B cell (primary cell): ENCODE measurements at regions of chr9 and their contacts with region 1.

Region 1: DNA sequence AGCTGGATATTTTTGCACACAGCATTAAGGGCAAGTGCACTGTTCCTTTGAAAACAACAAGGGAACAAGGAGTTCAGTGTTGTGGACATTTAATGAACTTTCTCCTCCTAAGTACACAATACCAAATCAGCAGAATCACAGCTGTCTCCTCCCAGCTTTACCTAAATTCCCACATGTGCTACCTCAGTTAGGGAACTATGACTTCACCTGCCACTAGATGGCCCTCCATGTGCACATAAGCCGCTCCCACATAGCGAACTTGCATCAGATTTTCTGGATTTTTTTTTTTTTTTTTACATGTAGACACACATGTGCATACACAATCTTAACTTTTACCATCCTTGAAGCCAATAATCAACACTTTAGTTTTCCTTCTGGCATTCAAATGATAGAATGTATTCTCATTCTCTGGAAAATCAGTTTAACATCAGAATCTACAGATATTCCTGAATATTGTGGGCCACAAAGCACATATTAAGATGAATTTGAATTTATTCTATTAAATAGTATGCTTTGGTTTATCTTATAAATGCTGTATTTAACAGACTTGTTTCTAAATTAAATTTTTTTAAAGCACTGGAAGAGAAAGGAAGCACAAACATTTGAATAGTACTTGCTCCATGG is 123.6 kb downstream of the PALM2AKAP2 start:
- DNase-seq: peak; percentile 82
- ATAC-seq: peak; percentile 63
- H3K4me3 ChIP-seq: no peak overlapping the region
- H3K4me3 Mint-ChIP-seq: no peak overlapping the region
- H3K27ac ChIP-seq: no peak overlapping the region
- H3K27ac Mint-ChIP-seq: no peak overlapping the region
- H3K4me1 ChIP-seq: peaks cover 34 to 35% of the 10 kb centered on the region in 2 donors
- H3K4me1 Mint-ChIP-seq: peaks cover 11% of the 10 kb centered on the region
- H3K27me3 ChIP-seq: no peaks in the 10 kb centered on the region
- H3K27me3 Mint-ChIP-seq: no peaks in the 10 kb centered on the region
- CTCF ChIP-seq: peak; percentile 94

Region 2: GRCh38 chr9:109574068-109574882 is 329.4 kb before region 1 on chr9:
- CTCF ChIA-PET with region 1: interaction called, 9 read pairs
- POLR2A ChIA-PET with region 1: no interaction called
- intact Hi-C with region 1: loop called (anchors 2 kb)
- DNase-seq: peak; percentile 47
- ATAC-seq: no peak
- H3K4me3 ChIP-seq: no peak overlapping the region
- H3K4me3 Mint-ChIP-seq: no peak overlapping the region
- H3K27ac ChIP-seq: no peak overlapping the region
- H3K27ac Mint-ChIP-seq: no peak overlapping the region
- H3K4me1 ChIP-seq: no peaks in the 10 kb centered on the region
- H3K4me1 Mint-ChIP-seq: no peaks in the 10 kb centered on the region
- H3K27me3 ChIP-seq: peaks cover 0 to 4% (median 0%) of the 10 kb centered on the region in 4 experiments
- H3K27me3 Mint-ChIP-seq: peaks cover 12% of the 10 kb centered on the region
- CTCF ChIP-seq: peak; percentile 82

Region 3: GRCh38 chr9:110048403-110048975 is 144.9 kb after region 1 on chr9:
- CTCF ChIA-PET with region 1: interaction called, 585 read pairs
- POLR2A ChIA-PET with region 1: interaction called, 17 read pairs
- intact Hi-C with region 1: loop called (anchors 2 kb)
- DNase-seq: peak; percentile 91
- ATAC-seq: peak; percentile 95
- H3K4me3 ChIP-seq: peak overlapping the region; percentile 79 to 98 (median 88)
- H3K4me3 Mint-ChIP-seq: peak overlapping the region; percentile 98
- H3K27ac ChIP-seq: peak overlapping the region; percentile 40 to 71
- H3K27ac Mint-ChIP-seq: peak overlapping the region; percentile 93
- H3K4me1 ChIP-seq: peaks cover 42 to 47% of the 10 kb centered on the region in 2 donors
- H3K4me1 Mint-ChIP-seq: peaks cover 56% of the 10 kb centered on the region
- H3K27me3 ChIP-seq: no peaks in the 10 kb centered on the region
- H3K27me3 Mint-ChIP-seq: no peaks in the 10 kb centered on the region
- CTCF ChIP-seq: no peak

Region 4: GRCh38 chr9:110099236-110100095 is 195.8 kb after region 1 on chr9:
- CTCF ChIA-PET with region 1: interaction called, 14 read pairs
- POLR2A ChIA-PET with region 1: no interaction called
- intact Hi-C with region 1: no loop called
- DNase-seq: no peak
- ATAC-seq: no peak
- H3K4me3 ChIP-seq: no peak overlapping the region
- H3K4me3 Mint-ChIP-seq: no peak overlapping the region
- H3K27ac ChIP-seq: peak overlapping the region; percentile 1 to 66
- H3K27ac Mint-ChIP-seq: peak overlapping the region; percentile 20
- H3K4me1 ChIP-seq: peaks cover 59 to 62% of the 10 kb centered on the region in 2 donors
- H3K4me1 Mint-ChIP-seq: peaks cover 85% of the 10 kb centered on the region
- H3K27me3 ChIP-seq: no peaks in the 10 kb centered on the region
- H3K27me3 Mint-ChIP-seq: no peaks in the 10 kb centered on the region
- CTCF ChIP-seq: no peak

Region 5: DNA sequence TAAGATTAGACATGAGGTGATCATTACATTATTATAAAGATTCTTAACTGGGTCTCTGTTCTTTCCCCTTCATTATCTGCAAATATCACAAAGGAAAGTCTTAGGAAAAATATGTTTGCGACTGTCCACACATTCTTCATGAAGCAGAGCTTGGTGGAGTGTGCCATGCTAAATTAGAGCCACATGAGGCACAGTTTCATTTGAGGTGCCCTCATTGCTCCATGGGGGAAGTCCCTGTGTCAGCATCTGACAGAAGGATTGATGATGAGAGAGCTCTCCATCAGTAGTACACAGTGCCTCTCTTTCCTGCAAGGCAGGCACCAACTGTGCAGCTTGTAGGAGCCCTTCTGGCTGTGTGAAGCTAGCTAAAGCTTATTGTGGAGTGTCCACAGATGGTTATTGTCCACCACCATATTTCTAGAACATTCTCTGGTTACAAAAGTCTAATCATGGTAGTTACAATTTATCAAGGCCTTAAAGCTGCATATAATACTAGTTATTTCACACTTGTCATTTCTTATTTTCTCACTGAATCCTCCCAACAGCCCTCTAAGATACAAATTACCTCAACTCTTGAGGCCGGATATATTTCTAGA is 240.4 kb after region 1 on chr9:
- CTCF ChIA-PET with region 1: interaction called, 250 read pairs
- POLR2A ChIA-PET with region 1: interaction called, 3 read pairs
- intact Hi-C with region 1: no loop called
- DNase-seq: peak; percentile 74
- ATAC-seq: peak; percentile 76
- H3K4me3 ChIP-seq: peak overlapping the region; percentile 7 to 60 (median 30)
- H3K4me3 Mint-ChIP-seq: peak overlapping the region; percentile 79
- H3K27ac ChIP-seq: peak overlapping the region; percentile 90 to 92
- H3K27ac Mint-ChIP-seq: peak overlapping the region; percentile 86
- H3K4me1 ChIP-seq: peaks cover 83 to 85% of the 10 kb centered on the region in 2 donors
- H3K4me1 Mint-ChIP-seq: peaks cover 90% of the 10 kb centered on the region
- H3K27me3 ChIP-seq: no peaks in the 10 kb centered on the region
- H3K27me3 Mint-ChIP-seq: no peaks in the 10 kb centered on the region
- CTCF ChIP-seq: peak; percentile 20

Region 6: DNA sequence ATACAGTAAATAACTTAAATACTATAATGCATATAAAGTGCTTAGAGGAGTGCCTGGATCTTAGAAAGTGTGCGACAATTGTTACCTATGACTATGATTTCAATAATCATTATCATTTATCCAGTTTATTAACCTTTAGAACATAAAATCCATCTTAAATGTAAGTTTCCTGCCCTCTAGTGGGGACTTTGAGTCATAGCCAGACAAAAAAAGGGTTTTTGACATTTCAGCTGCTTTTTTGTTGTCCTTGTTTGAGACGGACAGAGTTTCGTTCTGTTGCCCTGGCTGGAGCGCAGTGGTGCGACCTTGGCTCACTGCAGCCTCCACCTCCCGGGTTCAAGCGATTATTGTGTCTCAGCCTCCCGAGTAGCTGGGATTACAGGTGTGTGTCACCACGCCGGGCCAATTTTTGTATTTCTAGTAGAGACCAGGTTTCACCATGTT is 314.1 kb after region 1 on chr9:
- CTCF ChIA-PET with region 1: interaction called, 148 read pairs
- POLR2A ChIA-PET with region 1: no interaction called
- intact Hi-C with region 1: loop called (anchors 1 kb)
- DNase-seq: peak; percentile 62
- ATAC-seq: no peak
- H3K4me3 ChIP-seq: no peak overlapping the region
- H3K4me3 Mint-ChIP-seq: no peak overlapping the region
- H3K27ac ChIP-seq: no peak overlapping the region
- H3K27ac Mint-ChIP-seq: no peak overlapping the region
- H3K4me1 ChIP-seq: no peaks in the 10 kb centered on the region
- H3K4me1 Mint-ChIP-seq: peaks cover 3% of the 10 kb centered on the region
- H3K27me3 ChIP-seq: no peaks in the 10 kb centered on the region
- H3K27me3 Mint-ChIP-seq: peaks cover 11% of the 10 kb centered on the region
- CTCF ChIP-seq: peak; percentile 85